HEK293 (cell line): ENCODE measurements at regions of chr1 and their contacts with region 1.

Region 1: GRCh38 chr1:93909146-93910050 is at the start of gene GCLM:
- H3K4me3 ChIP-seq: peak within 1 kb of the TSS; percentile 87
- H3K27ac ChIP-seq: peak within 1 kb of the TSS; percentile 93
- H3K4me1 ChIP-seq: peaks cover 18% of the 10 kb centered on the region
- CTCF ChIP-seq: peak; percentile 95

Region 2: GRCh38 chr1:93919780-93920179 is 10.4 kb after region 1 on chr1:
- CTCF ChIA-PET with region 1: interaction called, 20 read pairs
- POLR2A ChIA-PET with region 1: no interaction called
- H3K4me3 ChIP-seq: no peak overlapping the region
- H3K27ac ChIP-seq: no peak overlapping the region
- H3K4me1 ChIP-seq: no peaks in the 10 kb centered on the region
- CTCF ChIP-seq: no peak

Region 3: GRCh38 chr1:94027721-94028515 is 118.5 kb after region 1 on chr1:
- CTCF ChIA-PET with region 1: no interaction called
- POLR2A ChIA-PET with region 1: no interaction called
- H3K4me3 ChIP-seq: no peak overlapping the region
- H3K27ac ChIP-seq: no peak overlapping the region
- H3K4me1 ChIP-seq: no peaks in the 10 kb centered on the region
- CTCF ChIP-seq: no peak